Activated naive CD4-positive, alpha-beta T cell treated with anti-CD3 and anti-CD28 coated beads for 36 hours (primary cell): ENCODE measurements at regions of chr10 and their contacts with region 1.

Region 1: GRCh38 chr10:62594093-62594520 is 210.4 kb upstream of the ADO start:
- DNase-seq: peak; percentile 66
- H3K4me3 Mint-ChIP-seq: no peak overlapping the region
- H3K27ac Mint-ChIP-seq: no peak overlapping the region
- H3K4me1 Mint-ChIP-seq: peaks cover 2% of the 10 kb centered on the region
- H3K27me3 Mint-ChIP-seq: peaks cover 7% of the 10 kb centered on the region

Region 2: DNA sequence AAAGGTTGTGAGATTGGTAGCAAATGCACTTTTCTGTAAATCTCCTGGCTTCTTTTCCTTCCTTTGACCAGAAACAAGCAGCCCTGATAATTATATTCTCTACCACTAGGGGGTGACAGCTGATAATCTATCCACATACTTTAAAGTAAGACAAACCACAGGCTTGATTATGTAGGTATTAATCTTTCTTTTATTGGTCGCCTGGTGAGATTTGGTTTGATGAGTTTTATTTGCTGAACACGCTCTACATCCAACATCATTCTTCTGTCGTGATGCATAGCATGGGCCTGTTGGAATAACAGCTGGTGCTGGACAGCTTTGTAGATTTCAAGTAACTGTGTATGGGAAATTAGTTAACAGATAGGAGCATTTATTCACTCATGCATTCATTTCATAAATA is 156.4 kb before region 1 on chr10:
- CTCF ChIA-PET with region 1: interaction called, 6 read pairs
- intact Hi-C with region 1: loop called (anchors 1 kb)
- DNase-seq: no peak
- H3K4me3 Mint-ChIP-seq: no peak overlapping the region
- H3K27ac Mint-ChIP-seq: no peak overlapping the region
- H3K4me1 Mint-ChIP-seq: peaks cover 19% of the 10 kb centered on the region
- H3K27me3 Mint-ChIP-seq: peaks cover 10% of the 10 kb centered on the region

Region 3: DNA sequence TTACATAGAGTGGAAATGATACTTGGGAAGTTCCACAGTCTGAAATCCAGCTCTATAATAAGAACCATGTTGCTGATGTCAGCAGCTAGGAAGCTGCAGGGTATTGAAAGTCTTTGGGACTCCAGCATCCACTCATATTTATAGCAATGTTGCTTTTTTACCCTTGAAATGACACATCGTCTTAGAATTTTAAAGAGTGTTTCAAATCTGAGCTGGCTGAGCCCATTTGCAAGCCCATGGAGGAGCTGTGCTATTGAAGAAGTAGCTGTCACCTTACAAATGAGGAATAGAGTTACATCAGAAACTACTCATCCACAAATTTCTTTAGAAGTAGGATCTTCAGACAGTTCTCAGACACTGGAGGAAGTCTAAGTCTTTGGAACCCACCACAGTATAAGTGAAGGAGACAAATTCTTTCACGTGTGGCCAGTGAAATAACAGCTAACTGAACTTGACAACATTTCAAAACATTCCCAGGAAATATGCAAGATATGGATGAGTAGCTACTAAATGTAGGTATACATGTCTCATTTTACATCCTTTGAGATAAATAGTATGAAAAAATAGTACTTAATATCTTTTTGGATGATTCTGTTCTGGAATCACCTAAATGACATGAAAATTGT is 16.3 kb before region 1 on chr10:
- CTCF ChIA-PET with region 1: interaction called, 10 read pairs
- intact Hi-C with region 1: no loop called
- DNase-seq: no peak
- H3K4me3 Mint-ChIP-seq: no peak overlapping the region
- H3K27ac Mint-ChIP-seq: no peak overlapping the region
- H3K4me1 Mint-ChIP-seq: no peaks in the 10 kb centered on the region
- H3K27me3 Mint-ChIP-seq: peaks cover 3% of the 10 kb centered on the region

Region 4: GRCh38 chr10:63013755-63014154 is 419.6 kb after region 1 on chr10:
- CTCF ChIA-PET with region 1: interaction called, 3 read pairs
- intact Hi-C with region 1: loop called (anchors 5 kb)
- DNase-seq: no peak
- H3K4me3 Mint-ChIP-seq: no peak overlapping the region
- H3K27ac Mint-ChIP-seq: no peak overlapping the region
- H3K4me1 Mint-ChIP-seq: no peaks in the 10 kb centered on the region
- H3K27me3 Mint-ChIP-seq: peaks cover 6% of the 10 kb centered on the region

Region 5: DNA sequence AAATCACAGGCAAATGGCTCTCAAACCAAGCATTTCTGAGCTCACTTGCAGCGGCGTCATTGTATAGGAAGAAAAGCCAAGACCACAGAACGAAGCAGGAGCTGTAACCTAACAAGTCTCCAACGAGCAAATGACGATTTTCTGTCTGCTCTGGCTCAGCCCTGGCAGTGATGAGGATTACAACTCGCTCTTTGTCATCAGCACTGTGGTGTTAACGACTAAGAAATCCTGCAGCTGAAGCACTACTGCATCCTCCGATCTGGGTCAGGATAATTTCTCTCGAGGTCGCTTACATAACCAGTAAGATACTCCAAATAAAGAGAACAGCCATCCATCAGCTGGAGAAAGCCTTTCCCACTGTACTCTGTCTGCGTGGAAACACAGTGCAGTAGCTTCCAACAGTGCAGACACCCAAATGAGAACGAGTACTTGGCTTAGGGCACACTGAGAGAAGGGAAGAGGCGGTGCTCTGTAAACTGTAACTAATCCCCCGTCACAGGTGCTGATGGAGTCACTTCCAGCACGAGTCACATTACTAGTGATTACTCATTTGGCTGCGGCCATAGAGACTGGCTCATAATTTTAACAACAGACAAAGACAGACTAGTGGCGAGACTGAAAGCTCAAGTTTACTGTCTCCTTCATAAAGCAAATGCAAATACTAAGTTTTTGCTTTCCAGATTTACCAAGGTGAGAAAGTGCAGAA is 674.8 kb after region 1 on chr10:
- CTCF ChIA-PET with region 1: no interaction called
- intact Hi-C with region 1: no loop called
- DNase-seq: peak; percentile 91
- H3K4me3 Mint-ChIP-seq: peak overlapping the region; percentile 88
- H3K27ac Mint-ChIP-seq: peak overlapping the region; percentile 98
- H3K4me1 Mint-ChIP-seq: peaks cover 22% of the 10 kb centered on the region
- H3K27me3 Mint-ChIP-seq: no peaks in the 10 kb centered on the region

Region 6: DNA sequence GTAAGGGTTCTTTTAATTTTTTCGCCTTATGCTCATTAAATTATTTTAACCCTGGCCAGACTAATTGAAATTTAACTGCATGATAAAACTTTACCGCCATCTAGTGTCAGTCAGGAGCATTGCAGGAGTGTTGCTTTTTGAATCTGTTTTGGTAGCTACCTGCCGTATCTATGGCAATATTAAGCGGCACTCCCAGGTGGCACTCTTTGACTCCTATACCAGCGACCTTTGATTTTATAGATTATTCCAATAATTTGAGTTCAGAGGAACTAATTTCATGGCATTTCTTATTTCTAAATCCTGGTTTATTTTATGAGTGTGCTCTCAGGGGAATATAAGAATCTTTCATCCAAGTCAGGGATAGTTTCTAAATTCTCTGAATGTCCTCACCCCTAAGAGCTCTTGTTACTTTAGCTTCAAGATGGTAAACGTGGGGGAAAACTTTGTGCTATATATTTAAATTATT is 1126.0 kb after region 1 on chr10:
- CTCF ChIA-PET with region 1: interaction called, 3 read pairs
- intact Hi-C with region 1: loop called (anchors 5 kb)
- DNase-seq: peak; percentile 67
- H3K4me3 Mint-ChIP-seq: no peak overlapping the region
- H3K27ac Mint-ChIP-seq: no peak overlapping the region
- H3K4me1 Mint-ChIP-seq: peaks cover 10% of the 10 kb centered on the region
- H3K27me3 Mint-ChIP-seq: peaks cover 4% of the 10 kb centered on the region